A549 (cell line): ENCODE measurements at regions of chr17 and their contacts with region 1.

Region 1: GRCh38 chr17:12693640-12694039 is 27.9 kb downstream of the MYOCD start:
- DNase-seq: no peak
- ATAC-seq: no peak
- H3K4me3 ChIP-seq: no peak overlapping the region
- H3K27ac ChIP-seq: no peak overlapping the region
- H3K4me1 ChIP-seq: peaks cover 16% of the 10 kb centered on the region; the same call in 2 of the 3 replicates
- CTCF ChIP-seq: no peak
- EP300 ChIP-seq: no peak
- POLR2A ChIP-seq: no peak
- RAD21 ChIP-seq: no peak

Region 2: DNA sequence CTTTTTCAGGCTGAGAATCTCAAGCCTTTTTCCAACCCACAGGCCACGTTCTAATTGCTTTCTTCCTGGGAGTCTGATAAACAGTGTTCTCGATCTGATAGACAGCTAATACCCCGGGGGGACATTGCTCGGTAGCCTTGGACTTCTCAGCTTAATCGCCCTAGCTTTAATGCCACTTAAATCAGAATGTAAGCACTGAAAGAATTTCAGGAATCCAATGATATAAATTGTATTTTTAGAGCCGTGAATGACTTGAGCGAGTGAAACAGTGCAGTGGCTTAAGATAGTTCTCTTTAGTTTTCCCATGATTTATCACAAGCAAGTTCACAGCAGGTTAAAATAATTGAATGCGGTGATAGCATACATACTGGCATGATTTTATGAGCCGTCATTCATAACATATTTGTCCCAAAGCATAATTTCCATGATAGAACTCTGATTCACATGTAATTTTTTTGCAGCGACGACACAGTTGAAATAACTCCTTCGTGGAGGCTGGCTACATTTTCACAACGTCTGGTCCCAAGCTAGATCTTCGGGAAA is 144.1 kb before region 1 on chr17:
- CTCF ChIA-PET with region 1: no interaction called
- POLR2A ChIA-PET with region 1: no interaction called
- DNase-seq: no peak
- ATAC-seq: no peak
- H3K4me3 ChIP-seq: no peak overlapping the region
- H3K27ac ChIP-seq: no peak overlapping the region
- H3K4me1 ChIP-seq: no peaks in the 10 kb centered on the region
- CTCF ChIP-seq: no peak
- EP300 ChIP-seq: no peak
- POLR2A ChIP-seq: no peak
- RAD21 ChIP-seq: no peak

Region 3: DNA sequence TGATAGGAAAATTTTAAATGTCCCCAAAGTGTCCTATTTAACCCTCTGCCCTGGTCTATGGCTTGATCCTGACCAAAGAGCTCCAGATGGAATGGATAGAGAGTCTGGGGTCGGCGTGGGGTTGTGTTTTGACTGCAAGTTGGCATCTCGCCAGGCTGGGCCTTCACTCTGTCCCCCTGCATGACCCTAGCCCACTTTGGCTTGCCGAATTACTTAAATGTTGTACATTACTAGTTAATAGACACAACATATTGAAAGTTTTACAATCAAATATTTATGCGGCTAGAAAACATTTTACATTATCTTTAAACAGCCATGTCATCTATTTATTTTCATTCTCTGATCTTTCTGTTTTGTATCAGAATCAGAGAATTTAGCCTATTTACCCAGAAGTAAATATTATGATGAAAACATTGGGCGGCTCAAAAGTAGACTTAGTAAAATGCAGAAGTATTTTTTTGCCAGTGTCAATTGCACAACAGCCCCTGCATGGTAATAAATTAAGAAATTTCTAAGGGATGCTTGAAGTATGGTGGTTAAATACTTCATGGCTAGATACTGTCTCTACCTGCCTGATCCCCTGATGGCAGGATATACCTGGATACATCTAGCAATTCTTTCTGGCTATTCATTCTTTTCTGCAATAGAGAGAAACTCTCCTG is 46.7 kb before region 1 on chr17:
- CTCF ChIA-PET with region 1: no interaction called
- POLR2A ChIA-PET with region 1: no interaction called
- DNase-seq: no peak
- ATAC-seq: no peak
- H3K4me3 ChIP-seq: no peak overlapping the region
- H3K27ac ChIP-seq: peak overlapping the region; percentile 67 to 82; a peak in 4 of 6 replicates
- H3K4me1 ChIP-seq: peaks cover 55% of the 10 kb centered on the region
- CTCF ChIP-seq: no peak
- EP300 ChIP-seq: no peak
- POLR2A ChIP-seq: no peak
- RAD21 ChIP-seq: no peak

Region 4: DNA sequence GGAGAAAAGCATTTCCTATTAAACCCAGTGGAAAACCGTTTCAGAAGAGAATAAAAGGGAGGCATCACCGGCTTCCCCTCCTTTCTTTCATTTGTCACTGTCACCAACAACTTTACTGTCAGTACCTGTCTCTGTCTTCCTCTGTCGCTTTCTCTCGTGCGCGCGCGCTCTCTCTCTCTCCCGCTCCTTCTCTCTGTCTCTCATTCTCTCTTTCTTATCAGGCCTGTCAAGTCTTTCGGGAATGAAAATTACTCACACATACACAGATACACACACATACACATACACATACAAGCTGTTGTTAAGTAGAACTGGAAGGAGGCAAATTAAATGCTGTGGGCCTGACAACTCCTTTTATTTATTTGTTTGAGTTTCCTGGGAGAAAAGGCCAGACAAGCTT is 10.3 kb before region 1 on chr17:
- CTCF ChIA-PET with region 1: interaction called, 10 read pairs
- POLR2A ChIA-PET with region 1: no interaction called
- DNase-seq: no peak
- ATAC-seq: no peak
- H3K4me3 ChIP-seq: no peak overlapping the region
- H3K27ac ChIP-seq: no peak overlapping the region
- H3K4me1 ChIP-seq: no peaks in the 10 kb centered on the region
- CTCF ChIP-seq: no peak
- EP300 ChIP-seq: no peak
- POLR2A ChIP-seq: no peak
- RAD21 ChIP-seq: no peak